ENCODE measurements at regions of chr2 and their contacts with region 1.

Region 1: GRCh38 chr2:20135631-20136050 is 84.2 kb upstream of the LAPTM4A start:
- DNase-seq: peak; percentile 89
- H3K4me3 ChIP-seq: no peak overlapping the region; a peak in 1 of 4 replicates
- H3K27ac ChIP-seq: no peak overlapping the region
- H3K4me1 ChIP-seq: peaks cover 0 to 34% of the 10 kb centered on the region in 2 experiments; a peak in 1 of 4 replicates
- H3K27me3 ChIP-seq: no peaks in the 10 kb centered on the region
- CTCF ChIP-seq: peak; percentile 98
- EP300 ChIP-seq: no peak
- RAD21 ChIP-seq: peak; percentile 84

Region 2: DNA sequence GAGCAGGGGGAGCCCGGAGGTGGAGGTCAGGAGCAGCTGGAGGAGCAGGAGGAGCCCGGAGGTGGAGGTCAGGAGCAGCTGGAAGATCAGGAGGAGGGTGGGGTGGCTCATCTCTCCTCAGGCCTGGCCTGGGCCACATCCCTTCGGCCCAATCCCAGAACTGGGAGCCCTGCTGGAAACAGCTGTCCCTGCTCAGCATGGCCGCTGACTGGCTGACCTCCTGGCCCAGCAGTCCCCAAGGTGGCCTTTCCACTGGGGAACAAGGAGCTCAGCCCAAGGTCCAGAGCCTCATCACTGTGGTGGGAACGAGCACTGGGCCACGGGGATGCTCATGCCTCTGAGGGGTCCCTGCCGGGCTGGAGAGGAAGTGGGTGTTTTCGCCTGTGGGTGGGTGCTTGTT is 17.6 kb before region 1 on chr2:
- CTCF ChIA-PET with region 1: interaction called, 13 read pairs
- POLR2A ChIA-PET with region 1: no interaction called
- DNase-seq: no peak
- H3K4me3 ChIP-seq: no peak overlapping the region
- H3K27ac ChIP-seq: no peak overlapping the region
- H3K4me1 ChIP-seq: peaks cover 0 to 6% of the 10 kb centered on the region in 2 experiments; a peak in 1 of 4 replicates
- H3K27me3 ChIP-seq: no peaks in the 10 kb centered on the region
- CTCF ChIP-seq: no peak
- EP300 ChIP-seq: no peak
- RAD21 ChIP-seq: no peak

Region 3: DNA sequence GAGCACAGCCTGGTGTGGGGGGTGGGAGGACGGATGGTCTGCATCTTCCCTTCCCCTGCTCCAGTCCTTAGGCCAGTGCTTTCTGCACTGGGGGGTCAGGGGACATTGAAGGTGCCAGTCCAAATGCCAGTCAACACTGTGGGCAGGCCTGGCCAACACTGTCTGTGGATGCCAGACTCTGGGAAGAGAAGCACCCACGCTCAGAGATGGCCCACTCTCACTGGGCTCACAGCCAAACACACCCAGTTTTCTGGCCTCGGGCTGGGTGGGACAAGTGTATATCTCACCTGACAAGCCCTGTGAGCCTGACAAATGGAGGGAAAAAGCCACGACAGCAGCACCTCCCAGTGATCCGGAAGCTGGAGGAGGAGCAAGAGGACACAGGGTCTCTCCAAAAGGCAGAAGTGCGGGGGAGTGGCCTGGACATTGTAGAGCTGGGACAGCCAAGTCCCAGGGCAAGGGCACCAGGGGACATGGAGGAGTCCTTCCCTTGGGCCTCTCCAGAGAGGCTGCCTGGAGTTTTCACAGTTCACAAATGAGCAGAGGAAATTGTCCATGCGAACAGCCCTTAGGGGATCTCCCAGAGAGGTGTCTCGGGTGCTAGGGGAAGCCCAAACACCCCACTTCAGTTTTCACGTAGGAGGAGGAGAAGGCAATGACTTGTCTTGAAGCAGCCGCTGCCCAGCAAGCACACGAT is 10.0 kb after region 1 on chr2:
- CTCF ChIA-PET with region 1: interaction called, 35 read pairs
- POLR2A ChIA-PET with region 1: no interaction called
- DNase-seq: no peak
- H3K4me3 ChIP-seq: no peak overlapping the region
- H3K27ac ChIP-seq: no peak overlapping the region
- H3K4me1 ChIP-seq: peaks cover 18 to 30% of the 10 kb centered on the region in 2 experiments
- H3K27me3 ChIP-seq: no peaks in the 10 kb centered on the region
- CTCF ChIP-seq: no peak
- EP300 ChIP-seq: no peak
- RAD21 ChIP-seq: no peak

Region 4: GRCh38 chr2:20205915-20206524 is 70.4 kb after region 1 on chr2:
- CTCF ChIA-PET with region 1: interaction called, 18 read pairs
- POLR2A ChIA-PET with region 1: no interaction called
- DNase-seq: no peak
- H3K4me3 ChIP-seq: no peak overlapping the region
- H3K27ac ChIP-seq: no peak overlapping the region; a peak in 1 of 4 replicates
- H3K4me1 ChIP-seq: peaks cover 0 to 30% of the 10 kb centered on the region in 2 experiments; a peak in 1 of 4 replicates
- H3K27me3 ChIP-seq: no peaks in the 10 kb centered on the region
- CTCF ChIP-seq: no peak
- EP300 ChIP-seq: no peak
- RAD21 ChIP-seq: peak; percentile 29; the same call in 1 of the 2 replicates

Region 5: GRCh38 chr2:20291106-20291564 is 155.5 kb after region 1 on chr2:
- CTCF ChIA-PET with region 1: interaction called, 14 read pairs
- POLR2A ChIA-PET with region 1: no interaction called
- DNase-seq: peak; percentile 79
- H3K4me3 ChIP-seq: no peak overlapping the region
- H3K27ac ChIP-seq: peak overlapping the region; percentile 37 to 64
- H3K4me1 ChIP-seq: peaks cover 0 to 7% of the 10 kb centered on the region in 2 experiments; a peak in 2 of 4 replicates
- H3K27me3 ChIP-seq: no peaks in the 10 kb centered on the region
- CTCF ChIP-seq: peak; percentile 89
- EP300 ChIP-seq: no peak
- RAD21 ChIP-seq: peak; percentile 74